Naive thymus-derived CD8-positive, alpha-beta T cell (primary cell): ENCODE measurements at regions of chr1 and their contacts with region 1.

Region 1: GRCh38 chr1:153928791-153929341 is 6.1 kb upstream of the GATAD2B start:
- DNase-seq: no peak
- ATAC-seq: no peak
- H3K4me3 Mint-ChIP-seq: no peak overlapping the region
- H3K27ac Mint-ChIP-seq: peak overlapping the region; percentile 44 to 89 (median 74)
- H3K4me1 Mint-ChIP-seq: peaks cover 8 to 26% (median 12%) of the 10 kb centered on the region in 4 donors
- H3K27me3 Mint-ChIP-seq: no peaks in the 10 kb centered on the region

Region 2: DNA sequence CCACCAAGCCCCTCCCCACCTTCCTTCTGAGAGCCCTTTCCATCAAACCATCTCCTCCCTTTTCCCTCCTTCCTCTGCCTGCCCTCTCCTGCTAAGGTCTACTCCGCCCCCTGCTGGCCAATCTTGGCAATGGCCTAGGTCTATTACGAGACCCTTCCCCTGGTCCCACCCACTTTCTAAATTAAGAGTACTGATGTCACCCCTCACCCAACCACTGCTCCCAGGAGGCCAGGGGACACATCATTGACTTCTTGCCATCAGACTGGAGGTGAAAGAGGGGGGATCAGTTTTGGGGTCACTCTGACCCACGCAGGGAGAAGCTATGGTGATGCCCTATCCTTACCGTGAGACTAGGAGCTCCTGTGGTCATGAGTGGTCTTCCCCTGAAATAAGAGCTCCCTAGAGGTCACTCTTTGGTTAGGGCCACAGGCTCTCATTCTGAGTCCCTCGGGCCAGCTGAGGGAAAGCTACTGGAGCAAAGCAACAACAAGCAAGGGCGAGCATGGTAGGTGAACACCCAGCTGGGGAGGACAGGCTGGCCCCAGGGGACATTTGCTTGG is 433.8 kb before region 1 on chr1:
- POLR2A ChIA-PET with region 1: no interaction called
- DNase-seq: peak; percentile 49 to 87 (median 68)
- ATAC-seq: peak; percentile 66 to 69
- H3K4me3 Mint-ChIP-seq: no peak overlapping the region
- H3K27ac Mint-ChIP-seq: peak overlapping the region in 2 of 10 donors; percentile 24 to 35
- H3K4me1 Mint-ChIP-seq: peaks cover 0 to 6% (median 2%) of the 10 kb centered on the region in 4 donors
- H3K27me3 Mint-ChIP-seq: peaks cover 13 to 28% (median 20%) of the 10 kb centered on the region in 5 donors

Region 3: GRCh38 chr1:153939016-153939415 is 10.2 kb after region 1 on chr1:
- POLR2A ChIA-PET with region 1: interaction called, 211 read pairs
- DNase-seq: no peak
- ATAC-seq: no peak
- H3K4me3 Mint-ChIP-seq: peak overlapping the region in 1 of 10 donors; percentile 54
- H3K27ac Mint-ChIP-seq: peak overlapping the region in 2 of 10 donors; percentile 4 to 79
- H3K4me1 Mint-ChIP-seq: peaks cover 23 to 42% (median 30%) of the 10 kb centered on the region in 4 donors
- H3K27me3 Mint-ChIP-seq: no peaks in the 10 kb centered on the region